ENCODE measurements at regions of chr9 and their contacts with region 1.

Region 1: GRCh38 chr9:133335878-133336811 is at the start of gene SURF6:
- DNase-seq: peak; percentile 97
- ATAC-seq: peak; percentile 96
- H3K4me3 Mint-ChIP-seq: peak within 1 kb of the TSS; percentile 86
- H3K27ac Mint-ChIP-seq: peak within 1 kb of the TSS; percentile 89
- H3K4me1 Mint-ChIP-seq: peaks cover 23% of the 10 kb centered on the region
- H3K27me3 Mint-ChIP-seq: no peaks in the 10 kb centered on the region
- total RNA-seq, gene SURF6: 22.4 to 24.3 TPM

Region 2: DNA sequence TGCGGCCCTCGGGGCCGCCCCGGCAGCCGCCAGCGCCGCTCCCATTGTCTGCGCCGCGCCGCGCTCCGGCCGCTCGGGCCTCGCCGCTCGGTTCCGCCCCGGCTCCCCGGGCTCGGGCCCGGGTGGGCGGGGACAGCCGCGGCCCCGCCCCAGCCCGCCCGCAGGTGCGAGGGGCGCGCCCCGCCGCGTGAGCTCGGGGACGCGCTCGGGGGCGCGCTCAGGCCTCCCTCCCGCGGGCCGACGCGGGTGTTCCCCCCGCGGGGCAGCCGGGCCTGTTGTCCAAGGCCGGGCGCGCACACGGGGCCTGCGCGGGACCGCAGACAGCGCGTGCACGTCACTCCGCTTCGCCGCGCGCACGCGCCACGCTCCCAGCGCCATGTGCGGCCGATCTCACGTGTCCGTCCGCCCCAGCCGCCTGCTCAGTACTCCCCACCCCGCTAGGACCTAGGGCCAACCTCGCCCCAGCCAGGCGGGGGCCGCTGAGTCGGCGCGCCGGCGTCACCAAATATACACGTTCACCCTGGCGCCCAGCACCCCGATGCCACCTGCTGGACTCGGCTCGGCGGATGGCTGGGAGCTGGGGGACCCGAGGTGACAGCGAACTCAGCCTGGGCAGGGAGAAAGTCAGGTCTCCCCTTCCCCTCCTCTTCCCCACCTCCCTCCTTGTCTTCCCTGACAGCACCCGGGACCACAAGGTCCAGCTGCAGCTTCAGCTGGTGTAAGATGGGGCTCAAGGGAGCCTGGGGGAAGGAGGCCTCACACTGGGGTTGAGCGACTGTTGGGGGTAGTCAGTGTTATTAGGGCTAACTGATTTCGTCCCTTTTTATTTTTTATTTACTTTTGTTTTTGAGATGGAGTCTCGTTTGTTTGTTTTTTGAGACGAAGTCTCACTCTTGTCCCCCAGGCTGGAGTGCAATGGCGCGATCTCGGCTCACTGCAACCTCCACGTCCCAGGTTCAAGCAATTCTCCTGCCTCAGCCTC is 186.7 kb before region 1 on chr9:
- CTCF ChIA-PET with region 1: no interaction called
- POLR2A ChIA-PET with region 1: no interaction called
- intact Hi-C with region 1: loop called in 1 of 2 experiments (anchors 1 kb)
- DNase-seq: peak; percentile 92
- ATAC-seq: peak; percentile 68
- H3K4me3 Mint-ChIP-seq: peak overlapping the region; percentile 63
- H3K27ac Mint-ChIP-seq: peak overlapping the region; percentile 67
- H3K4me1 Mint-ChIP-seq: peaks cover 27% of the 10 kb centered on the region
- H3K27me3 Mint-ChIP-seq: no peaks in the 10 kb centered on the region

Region 3: DNA sequence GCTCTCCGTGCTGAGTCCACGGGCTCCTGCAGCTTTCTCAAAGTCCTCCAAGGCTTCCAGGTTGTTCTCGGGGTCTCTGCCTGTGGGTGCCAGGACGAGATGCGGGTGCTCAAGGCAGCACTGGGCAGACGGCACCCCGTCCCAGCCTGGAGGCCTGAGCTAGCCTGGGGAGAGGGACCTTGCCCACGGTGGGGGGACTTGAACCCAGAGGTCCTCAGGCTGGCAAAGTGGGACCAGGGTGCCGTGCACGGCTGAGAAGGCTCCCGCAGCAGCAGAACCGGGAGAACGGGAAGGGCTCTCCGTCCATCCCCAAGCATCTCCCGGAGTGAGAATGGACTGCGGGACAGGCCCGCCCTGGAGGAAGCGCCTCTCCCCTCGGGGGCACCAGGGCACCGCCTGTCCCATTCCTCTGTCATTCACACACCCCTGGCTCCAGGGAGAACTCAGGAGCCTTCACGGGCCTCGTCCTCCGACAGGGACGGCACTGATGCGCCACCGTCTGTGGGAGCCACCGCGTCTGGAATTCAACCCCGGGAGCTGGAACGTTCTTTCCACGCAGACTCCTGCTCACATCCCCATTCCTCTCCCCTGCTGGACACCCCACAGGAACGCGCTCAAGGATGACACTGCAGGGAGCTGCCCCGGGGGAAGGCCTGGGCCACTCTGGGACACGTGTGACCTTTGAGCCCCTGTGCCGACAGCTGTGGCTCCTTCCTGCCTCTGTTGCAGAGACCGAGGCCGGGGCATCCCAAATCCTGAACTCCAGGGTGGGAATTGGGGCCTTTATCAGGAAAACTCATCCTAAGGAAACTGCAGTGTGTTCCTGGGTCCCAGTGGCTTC is 110.8 kb before region 1 on chr9:
- CTCF ChIA-PET with region 1: no interaction called
- POLR2A ChIA-PET with region 1: no interaction called
- intact Hi-C with region 1: no loop called
- DNase-seq: no peak
- ATAC-seq: no peak
- H3K4me3 Mint-ChIP-seq: no peak overlapping the region
- H3K27ac Mint-ChIP-seq: no peak overlapping the region
- H3K4me1 Mint-ChIP-seq: peaks cover 3% of the 10 kb centered on the region
- H3K27me3 Mint-ChIP-seq: peaks cover 15% of the 10 kb centered on the region

Region 4: GRCh38 chr9:133290751-133291302 is 45.3 kb before region 1 on chr9:
- CTCF ChIA-PET with region 1: no interaction called
- POLR2A ChIA-PET with region 1: no interaction called
- intact Hi-C with region 1: loop called in 1 of 2 experiments (anchors 5 kb)
- DNase-seq: no peak
- ATAC-seq: no peak
- H3K4me3 Mint-ChIP-seq: no peak overlapping the region
- H3K27ac Mint-ChIP-seq: no peak overlapping the region
- H3K4me1 Mint-ChIP-seq: no peaks in the 10 kb centered on the region
- H3K27me3 Mint-ChIP-seq: peaks cover 15% of the 10 kb centered on the region

Region 5: DNA sequence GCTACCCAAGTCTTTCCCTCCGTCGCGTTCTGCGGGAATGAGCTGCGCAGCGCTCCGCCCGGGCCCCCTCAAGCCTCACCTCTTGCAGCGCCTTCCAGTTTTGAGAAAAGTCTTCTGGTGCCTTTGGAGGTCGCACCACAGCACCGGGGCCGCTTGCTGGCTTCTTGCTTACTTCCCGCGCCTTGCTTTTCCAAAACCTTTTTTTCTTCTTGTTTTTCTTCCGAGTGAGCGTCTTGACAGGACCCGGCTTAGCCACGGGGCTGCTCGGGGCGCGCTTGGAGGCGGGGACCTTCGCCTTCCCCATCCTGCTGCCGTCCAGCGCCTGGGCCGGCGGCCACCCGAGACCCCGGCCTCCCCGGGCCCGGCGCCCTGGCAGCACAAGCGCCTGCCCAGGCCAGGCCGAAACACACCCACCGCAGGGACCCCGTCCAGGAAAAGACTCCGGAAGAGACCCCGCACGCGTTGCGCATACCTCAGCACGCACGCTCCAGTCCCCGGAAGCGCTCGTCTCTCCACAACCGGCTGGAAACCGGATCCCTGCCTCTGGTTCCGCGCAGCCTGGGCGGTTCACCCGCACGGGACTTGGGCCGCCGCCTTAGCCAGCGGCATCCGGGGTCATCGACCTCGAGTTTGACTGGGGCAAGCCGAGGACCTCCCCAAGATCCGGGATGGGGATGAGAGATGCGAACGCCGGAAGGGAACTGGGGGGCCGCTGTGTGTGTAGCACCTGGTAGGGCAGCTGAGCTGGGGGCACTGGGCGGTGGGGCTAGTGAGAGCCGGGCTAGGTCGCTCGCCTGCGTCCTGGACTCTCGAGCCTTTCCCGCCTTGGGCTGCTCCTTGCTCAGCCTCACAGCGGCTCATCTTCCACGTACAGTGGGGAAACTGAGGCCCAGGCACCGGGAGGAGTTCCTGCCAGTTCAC is 81.7 kb after region 1 on chr9 and contains the start of gene REXO4:
- CTCF ChIA-PET with region 1: no interaction called
- POLR2A ChIA-PET with region 1: no interaction called
- intact Hi-C with region 1: loop called in 1 of 2 experiments (anchors 1 kb)
- DNase-seq: peak; percentile 92
- ATAC-seq: peak; percentile 87
- H3K4me3 Mint-ChIP-seq: peak within 1 kb of the TSS; percentile 92
- H3K27ac Mint-ChIP-seq: peak within 1 kb of the TSS; percentile 93
- H3K4me1 Mint-ChIP-seq: peaks cover 51% of the 10 kb centered on the region
- H3K27me3 Mint-ChIP-seq: no peaks in the 10 kb centered on the region
- total RNA-seq, gene REXO4: 25.9 to 34.3 TPM

Region 6: DNA sequence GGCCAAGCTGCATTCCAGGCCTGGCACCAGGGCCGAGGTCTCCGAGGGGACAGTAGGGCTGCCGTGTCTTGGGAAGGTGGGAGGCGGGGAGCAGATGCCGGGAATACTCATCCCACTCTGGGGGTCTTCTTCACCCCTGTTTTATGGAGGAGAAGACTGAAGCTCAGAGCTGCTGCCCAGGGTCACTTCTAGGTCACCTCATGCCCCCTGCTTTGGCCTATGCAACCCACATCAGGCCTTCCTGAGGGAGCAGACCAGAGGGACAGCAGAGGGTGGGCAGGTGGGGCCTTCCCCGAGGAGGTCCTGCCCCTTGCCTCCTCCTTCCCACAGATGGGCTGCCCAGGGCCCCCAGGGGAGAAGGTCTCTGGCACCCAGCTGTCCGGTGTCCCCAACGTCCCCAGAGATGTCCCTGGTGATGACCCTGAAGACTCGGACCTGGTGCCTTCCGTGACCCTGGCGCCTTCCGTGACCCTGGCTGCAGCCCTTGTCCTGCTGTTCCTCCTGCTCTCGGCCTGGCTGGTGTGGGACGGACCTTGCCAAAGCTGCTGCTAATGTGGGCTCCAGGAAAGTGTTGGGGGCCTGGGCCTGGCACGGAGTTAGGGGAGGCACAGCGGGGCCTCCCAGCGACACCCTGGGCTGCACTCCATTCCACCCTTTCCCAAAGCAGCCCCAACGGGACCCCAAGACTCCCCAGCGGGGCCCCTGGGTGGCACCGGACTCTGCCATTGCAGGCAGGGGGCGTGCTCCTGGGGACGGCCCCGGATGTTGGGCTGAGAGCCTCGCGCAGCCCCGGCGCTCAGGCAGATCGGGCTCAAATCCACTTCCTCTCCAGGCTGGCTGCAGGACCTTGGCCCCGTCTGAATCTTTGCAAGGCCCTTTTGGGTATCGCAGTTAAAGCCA is 149.5 kb after region 1 on chr9:
- CTCF ChIA-PET with region 1: interaction called, 3 read pairs
- POLR2A ChIA-PET with region 1: no interaction called
- intact Hi-C with region 1: loop called in 1 of 2 experiments (anchors 1 kb)
- DNase-seq: peak; percentile 41
- ATAC-seq: peak; percentile 45
- H3K4me3 Mint-ChIP-seq: no peak overlapping the region
- H3K27ac Mint-ChIP-seq: no peak overlapping the region
- H3K4me1 Mint-ChIP-seq: peaks cover 7% of the 10 kb centered on the region
- H3K27me3 Mint-ChIP-seq: no peaks in the 10 kb centered on the region